Activated CD8-positive, alpha-beta T cell treated with anti-CD3 and anti-CD28 coated beads, Interleukin-2, amount 10 ng/mL, durations not matched to agents 7 days and 5 days (primary cell): ENCODE measurements at regions of chr3 and their contacts with region 1.

Region 1: DNA sequence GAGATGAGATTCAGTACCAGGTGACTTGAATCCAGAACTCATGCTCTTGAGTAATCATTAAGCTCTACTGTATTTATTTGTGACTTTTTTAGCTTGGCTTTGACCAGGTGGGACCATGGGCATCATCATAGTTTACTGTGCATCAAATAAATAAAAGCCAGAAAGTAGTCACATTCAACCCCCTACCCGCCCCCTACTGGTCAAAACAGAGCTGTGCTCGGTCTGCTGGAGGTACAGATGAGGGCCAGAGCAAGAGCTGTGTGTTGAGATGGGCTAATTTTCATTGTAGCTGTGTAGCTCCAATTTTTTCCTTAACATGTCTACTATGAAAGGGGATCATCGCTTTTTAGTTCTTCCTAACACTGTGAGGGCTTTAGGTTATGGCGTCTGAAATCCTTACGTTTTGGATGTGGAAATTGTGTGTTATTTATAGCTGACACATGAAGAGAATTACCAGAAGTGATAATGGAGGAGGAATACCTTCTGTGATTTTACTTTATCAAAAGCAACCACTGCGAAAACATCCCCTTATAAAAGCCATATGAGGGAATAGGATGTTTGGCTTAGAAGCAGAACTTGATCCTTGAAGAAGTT is 375.1 kb downstream of the PTPRG start:
- DNase-seq: peak; percentile 40
- ATAC-seq: no peak
- H3K4me3 Mint-ChIP-seq: no peak overlapping the region
- H3K27ac Mint-ChIP-seq: no peak overlapping the region
- H3K4me1 Mint-ChIP-seq: no peaks in the 10 kb centered on the region
- H3K27me3 Mint-ChIP-seq: no peaks in the 10 kb centered on the region

Region 2: GRCh38 chr3:61858056-61858455 is 78.4 kb before region 1 on chr3:
- CTCF ChIA-PET with region 1: interaction called, 10 read pairs
- POLR2A ChIA-PET with region 1: no interaction called
- DNase-seq: no peak
- ATAC-seq: no peak
- H3K4me3 Mint-ChIP-seq: no peak overlapping the region
- H3K27ac Mint-ChIP-seq: no peak overlapping the region
- H3K4me1 Mint-ChIP-seq: no peaks in the 10 kb centered on the region
- H3K27me3 Mint-ChIP-seq: peaks cover 4% of the 10 kb centered on the region

Region 3: DNA sequence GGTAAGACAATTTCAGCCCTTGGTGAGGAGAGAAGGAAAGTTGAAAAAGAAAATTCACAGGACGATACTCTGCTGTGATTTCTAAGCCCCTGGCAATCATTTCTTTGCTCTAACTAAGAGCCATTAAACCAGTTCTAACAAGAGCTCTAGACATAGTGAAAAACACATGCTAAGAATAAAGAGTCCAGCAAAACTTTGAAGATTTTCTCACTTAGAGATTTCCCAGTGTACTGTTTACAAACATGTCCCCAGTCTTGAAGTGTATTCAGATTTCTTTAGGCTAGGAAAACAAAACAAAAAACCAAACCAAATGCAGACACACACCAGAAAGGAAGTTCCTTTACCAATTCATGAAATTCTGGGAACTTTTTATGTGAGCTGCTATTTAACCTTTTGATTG is 49.2 kb before region 1 on chr3:
- CTCF ChIA-PET with region 1: no interaction called
- POLR2A ChIA-PET with region 1: no interaction called
- DNase-seq: no peak
- ATAC-seq: no peak
- H3K4me3 Mint-ChIP-seq: no peak overlapping the region
- H3K27ac Mint-ChIP-seq: no peak overlapping the region
- H3K4me1 Mint-ChIP-seq: no peaks in the 10 kb centered on the region
- H3K27me3 Mint-ChIP-seq: no peaks in the 10 kb centered on the region

Region 4: DNA sequence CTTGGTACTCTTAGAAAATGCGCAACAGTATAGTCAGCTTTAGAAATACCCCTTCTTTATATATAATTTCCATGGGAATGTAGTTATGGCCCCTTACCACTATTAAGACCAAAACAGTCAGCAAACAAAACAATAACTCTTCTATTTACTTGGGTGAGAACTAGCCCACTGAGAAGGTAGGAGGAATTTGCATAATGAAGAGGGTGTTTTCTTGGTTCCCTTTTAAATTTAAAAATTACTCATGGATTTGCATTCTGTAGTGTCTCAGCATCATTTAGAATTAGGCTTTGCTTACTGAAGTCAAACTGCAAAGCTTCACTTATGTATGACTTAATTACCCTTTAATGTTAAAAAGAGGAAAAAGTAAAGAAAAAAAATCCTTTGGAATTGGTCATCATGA is 24.3 kb before region 1 on chr3:
- CTCF ChIA-PET with region 1: no interaction called
- POLR2A ChIA-PET with region 1: no interaction called
- DNase-seq: no peak
- ATAC-seq: no peak
- H3K4me3 Mint-ChIP-seq: no peak overlapping the region
- H3K27ac Mint-ChIP-seq: no peak overlapping the region
- H3K4me1 Mint-ChIP-seq: no peaks in the 10 kb centered on the region
- H3K27me3 Mint-ChIP-seq: no peaks in the 10 kb centered on the region

Region 5: DNA sequence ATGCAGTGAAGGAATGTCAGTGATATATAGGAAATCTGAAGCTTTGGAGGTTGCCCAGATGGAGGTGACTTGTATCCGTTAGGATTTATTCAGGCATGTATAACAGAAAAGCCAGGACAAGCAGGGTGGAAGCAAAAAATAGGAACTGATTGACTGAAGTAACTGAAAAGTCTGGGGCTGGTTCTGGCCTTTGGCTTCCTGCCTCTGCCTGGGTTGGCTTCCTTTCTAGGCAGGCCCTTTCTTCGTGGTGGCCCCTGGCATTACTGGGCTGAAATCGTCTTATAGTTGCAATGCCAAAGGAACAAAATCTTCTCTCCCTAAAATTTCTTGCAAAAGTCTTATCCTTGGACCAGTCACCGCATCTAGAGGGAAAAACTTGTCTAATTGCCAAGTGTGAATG is 11.0 kb after region 1 on chr3:
- CTCF ChIA-PET with region 1: interaction called, 11 read pairs
- POLR2A ChIA-PET with region 1: no interaction called
- DNase-seq: no peak
- ATAC-seq: no peak
- H3K4me3 Mint-ChIP-seq: no peak overlapping the region
- H3K27ac Mint-ChIP-seq: no peak overlapping the region
- H3K4me1 Mint-ChIP-seq: no peaks in the 10 kb centered on the region
- H3K27me3 Mint-ChIP-seq: no peaks in the 10 kb centered on the region